OCI-LY7 (cell line): ENCODE measurements at regions of chr2 and their contacts with region 1.

Region 1: DNA sequence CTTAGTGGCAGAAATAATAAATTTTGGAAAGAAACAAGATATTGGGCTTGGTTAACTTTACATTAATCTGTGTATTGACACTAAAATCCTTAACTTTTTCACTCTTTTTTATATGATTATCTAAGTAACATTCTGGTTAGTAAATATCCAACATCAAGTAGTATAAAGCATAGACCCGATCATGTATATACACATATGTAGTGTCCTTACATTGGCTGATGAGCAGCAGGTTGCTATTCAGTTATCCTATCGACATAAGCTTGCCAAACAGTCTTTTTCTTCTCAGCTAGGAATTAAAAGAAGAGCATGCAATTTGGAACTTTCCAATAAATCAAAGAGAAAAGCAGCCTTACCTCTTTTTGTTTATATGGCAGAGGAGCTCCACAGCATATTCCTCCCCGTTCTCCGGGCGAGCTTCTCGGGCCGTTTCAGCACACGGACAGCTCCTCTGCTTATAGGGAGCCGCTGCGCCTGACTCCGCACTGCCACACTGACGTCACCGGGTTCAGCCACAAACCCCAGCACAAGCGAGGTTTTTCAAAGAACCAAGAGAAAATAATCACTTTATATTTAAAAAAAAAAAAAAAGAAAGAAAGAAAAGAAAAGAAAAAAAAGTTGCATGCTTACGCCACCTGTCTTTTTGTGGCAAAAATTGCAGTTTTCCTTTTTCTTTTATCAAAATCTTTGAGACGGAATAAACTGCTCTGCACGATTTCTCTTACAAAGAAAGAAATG is at the start of gene SCG2:
- DNase-seq: no peak
- H3K4me3 ChIP-seq: no peak within 1 kb of the TSS
- H3K27ac ChIP-seq: no peak within 1 kb of the TSS
- H3K4me1 ChIP-seq: no peaks in the 10 kb centered on the region
- CTCF ChIP-seq: peak; percentile 65
- total RNA-seq, gene SCG2: 0.06 and 0.26 TPM in 2 replicates

Region 2: GRCh38 chr2:222976521-222977076 is 625.5 kb before region 1 on chr2:
- CTCF ChIA-PET with region 1: interaction called, 7 read pairs
- POLR2A ChIA-PET with region 1: no interaction called
- intact Hi-C with region 1: loop called (anchors 10 kb)
- DNase-seq: no peak
- H3K4me3 ChIP-seq: no peak overlapping the region
- H3K27ac ChIP-seq: no peak overlapping the region
- H3K4me1 ChIP-seq: no peaks in the 10 kb centered on the region
- CTCF ChIP-seq: no peak

Region 3: DNA sequence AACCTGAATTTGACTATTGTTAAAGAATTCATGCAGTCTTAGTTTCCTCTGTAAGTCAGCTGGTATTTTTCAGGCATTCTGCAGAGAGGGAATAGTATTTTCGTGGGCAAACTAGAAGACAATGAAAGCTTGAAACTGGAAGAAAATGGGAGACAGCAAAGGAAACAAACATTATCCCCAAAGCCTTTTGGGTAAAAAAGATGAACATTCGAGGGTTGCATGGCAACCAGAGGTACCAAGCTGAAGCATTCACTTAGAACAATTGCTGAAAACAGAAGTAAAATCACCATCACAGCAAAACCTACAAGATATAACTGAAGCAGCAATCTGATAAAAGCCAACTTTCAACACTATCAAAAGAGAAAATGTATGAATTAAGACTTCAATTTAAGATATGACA is 233.6 kb before region 1 on chr2:
- CTCF ChIA-PET with region 1: no interaction called
- POLR2A ChIA-PET with region 1: no interaction called
- intact Hi-C with region 1: no loop called
- DNase-seq: no peak
- H3K4me3 ChIP-seq: no peak overlapping the region
- H3K27ac ChIP-seq: no peak overlapping the region
- H3K4me1 ChIP-seq: no peaks in the 10 kb centered on the region
- CTCF ChIP-seq: no peak

Region 4: GRCh38 chr2:223626716-223627115 is 24.6 kb after region 1 on chr2:
- CTCF ChIA-PET with region 1: no interaction called
- POLR2A ChIA-PET with region 1: no interaction called
- intact Hi-C with region 1: no loop called
- DNase-seq: no peak
- H3K4me3 ChIP-seq: no peak overlapping the region
- H3K27ac ChIP-seq: no peak overlapping the region
- H3K4me1 ChIP-seq: no peaks in the 10 kb centered on the region
- CTCF ChIP-seq: no peak